Activated CD8-positive, alpha-beta T cell treated with anti-CD3 and anti-CD28 coated beads, Interleukin-2, amount 10 ng/mL, durations not matched to agents 7 days and 5 days (primary cell): ENCODE measurements at regions of chr1 and their contacts with region 1.

Region 1: DNA sequence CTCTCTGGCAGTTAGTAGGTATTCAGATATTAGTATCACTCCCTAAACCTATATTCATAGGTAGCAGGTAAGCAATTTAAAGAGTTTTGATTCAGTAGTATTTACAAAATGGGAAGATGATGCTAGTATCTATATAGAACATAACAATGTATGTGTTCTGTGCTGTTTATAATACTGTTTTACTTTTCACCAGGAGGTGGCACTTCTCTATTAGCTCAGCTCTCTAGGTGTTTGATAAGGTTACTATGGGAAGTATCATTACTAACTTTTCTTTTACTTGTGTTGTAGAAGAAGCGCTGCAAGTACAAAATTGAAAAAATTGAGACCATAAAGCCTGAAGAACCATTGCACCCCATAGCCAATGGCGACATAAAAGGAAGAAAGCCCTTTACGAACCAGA is 49.4 kb upstream of the FASLG start:
- DNase-seq: no peak
- ATAC-seq: peak; percentile 82
- H3K4me3 Mint-ChIP-seq: no peak overlapping the region
- H3K27ac Mint-ChIP-seq: peak overlapping the region; percentile 26
- H3K4me1 Mint-ChIP-seq: peaks cover 18% of the 10 kb centered on the region
- H3K27me3 Mint-ChIP-seq: no peaks in the 10 kb centered on the region

Region 2: DNA sequence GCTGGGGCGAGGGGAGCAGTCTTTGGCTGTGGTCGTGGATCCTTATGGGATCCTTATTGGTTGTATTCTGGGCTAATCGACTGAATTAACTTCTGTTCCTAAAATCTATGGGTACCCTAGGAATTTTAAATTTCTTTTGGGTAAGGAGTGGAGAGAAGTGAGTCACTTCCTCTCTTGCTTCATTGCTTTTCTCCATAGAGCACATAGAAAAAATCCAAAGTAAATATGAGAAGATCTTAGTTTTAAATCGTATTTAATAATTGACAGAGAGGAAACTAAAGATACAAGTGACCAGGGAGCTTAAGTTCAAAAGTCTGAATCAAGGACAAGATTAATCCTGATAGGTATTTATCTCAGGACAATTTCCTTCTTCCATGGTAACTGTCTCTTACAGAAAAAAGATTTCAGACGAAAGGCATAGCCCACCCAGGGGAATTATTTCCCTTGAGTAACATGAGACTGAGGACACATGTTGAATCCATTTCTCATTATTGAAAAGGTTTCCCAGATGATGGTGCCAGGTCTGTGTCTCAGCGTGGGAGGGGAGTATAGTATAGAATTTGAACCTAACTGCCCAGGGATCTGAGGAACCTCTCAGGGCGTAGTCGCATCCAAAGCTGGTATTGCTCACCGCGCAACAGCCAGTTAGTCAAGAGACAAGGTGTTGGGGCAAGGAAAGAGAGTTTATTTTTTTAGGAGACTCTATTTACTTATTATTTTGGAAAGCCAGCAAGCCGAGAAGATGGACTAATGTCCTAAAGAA is 20.7 kb after region 1 on chr1:
- CTCF ChIA-PET with region 1: interaction called, 12 read pairs
- POLR2A ChIA-PET with region 1: no interaction called
- DNase-seq: no peak
- ATAC-seq: no peak
- H3K4me3 Mint-ChIP-seq: no peak overlapping the region
- H3K27ac Mint-ChIP-seq: no peak overlapping the region
- H3K4me1 Mint-ChIP-seq: peaks cover 51% of the 10 kb centered on the region
- H3K27me3 Mint-ChIP-seq: peaks cover 6% of the 10 kb centered on the region

Region 3: GRCh38 chr1:172638885-172639831 is 29.6 kb after region 1 on chr1:
- CTCF ChIA-PET with region 1: interaction called, 11 read pairs
- POLR2A ChIA-PET with region 1: no interaction called
- DNase-seq: peak; percentile 87
- ATAC-seq: peak; percentile 81
- H3K4me3 Mint-ChIP-seq: peak overlapping the region; percentile 69
- H3K27ac Mint-ChIP-seq: peak overlapping the region; percentile 95
- H3K4me1 Mint-ChIP-seq: peaks cover 74% of the 10 kb centered on the region
- H3K27me3 Mint-ChIP-seq: no peaks in the 10 kb centered on the region

Region 4: DNA sequence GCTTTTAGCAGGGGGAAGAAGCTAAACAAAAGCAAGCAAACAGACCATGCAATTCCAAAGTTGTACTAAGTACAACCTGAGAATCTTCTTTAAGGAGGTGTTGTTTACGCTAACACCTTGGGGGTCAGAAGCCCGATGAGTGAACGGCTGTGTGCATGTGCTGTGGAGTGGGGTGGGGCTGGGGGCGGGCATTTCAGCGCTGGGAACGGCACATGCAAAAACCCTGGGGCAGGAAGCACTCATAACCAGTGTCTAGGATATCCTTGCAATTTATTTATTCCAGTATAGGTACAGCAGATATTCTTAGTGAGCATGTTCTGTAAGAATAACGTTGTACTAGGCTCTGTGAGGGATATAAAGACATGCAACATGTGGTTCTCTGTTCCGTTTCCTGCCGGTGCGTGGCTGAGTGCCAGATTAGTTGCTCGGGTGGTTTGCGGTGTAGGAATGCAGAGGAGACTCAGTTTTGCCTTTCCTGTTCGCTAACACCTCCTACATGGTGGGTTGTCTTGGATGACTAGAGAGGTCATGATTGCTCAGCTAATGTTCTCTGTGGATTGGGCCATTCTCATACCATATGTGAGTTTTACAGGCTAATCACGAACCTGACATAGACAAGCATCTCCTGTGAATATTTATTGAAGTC is 53.1 kb after region 1 on chr1:
- CTCF ChIA-PET with region 1: interaction called, 13 read pairs
- POLR2A ChIA-PET with region 1: interaction called, 3 read pairs
- DNase-seq: peak; percentile 93
- ATAC-seq: peak; percentile 80
- H3K4me3 Mint-ChIP-seq: peak overlapping the region; percentile 81
- H3K27ac Mint-ChIP-seq: peak overlapping the region; percentile 83
- H3K4me1 Mint-ChIP-seq: peaks cover 81% of the 10 kb centered on the region
- H3K27me3 Mint-ChIP-seq: no peaks in the 10 kb centered on the region

Region 5: GRCh38 chr1:172671591-172671990 is 62.1 kb after region 1 on chr1:
- CTCF ChIA-PET with region 1: interaction called, 11 read pairs
- POLR2A ChIA-PET with region 1: no interaction called
- DNase-seq: no peak
- ATAC-seq: no peak
- H3K4me3 Mint-ChIP-seq: no peak overlapping the region
- H3K27ac Mint-ChIP-seq: peak overlapping the region; percentile 25
- H3K4me1 Mint-ChIP-seq: peaks cover 89% of the 10 kb centered on the region
- H3K27me3 Mint-ChIP-seq: no peaks in the 10 kb centered on the region

Region 6: DNA sequence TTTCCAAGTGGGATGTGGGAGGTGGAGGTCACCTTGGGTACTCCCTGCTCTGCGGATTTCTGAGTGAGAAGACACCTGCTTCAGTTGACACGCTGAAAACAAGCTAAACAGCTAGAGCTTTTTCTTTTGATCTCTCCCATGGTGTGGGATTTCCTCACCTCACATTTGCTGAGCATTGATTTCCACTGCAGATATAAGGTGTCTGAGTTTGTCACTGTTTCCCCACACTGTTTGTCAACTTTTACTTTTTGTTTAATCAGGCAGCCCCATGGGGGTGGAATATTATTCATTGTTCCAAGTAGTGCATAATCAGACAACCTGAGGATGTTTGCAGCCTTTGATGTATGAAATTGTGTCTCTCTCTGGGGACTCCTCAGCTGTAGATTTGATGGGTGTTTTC is 98.9 kb after region 1 on chr1:
- CTCF ChIA-PET with region 1: interaction called, 15 read pairs
- POLR2A ChIA-PET with region 1: no interaction called
- DNase-seq: peak; percentile 61
- ATAC-seq: peak; percentile 81
- H3K4me3 Mint-ChIP-seq: peak overlapping the region; percentile 43
- H3K27ac Mint-ChIP-seq: peak overlapping the region; percentile 65
- H3K4me1 Mint-ChIP-seq: peaks cover 52% of the 10 kb centered on the region
- H3K27me3 Mint-ChIP-seq: peaks cover 2% of the 10 kb centered on the region

Region 7: DNA sequence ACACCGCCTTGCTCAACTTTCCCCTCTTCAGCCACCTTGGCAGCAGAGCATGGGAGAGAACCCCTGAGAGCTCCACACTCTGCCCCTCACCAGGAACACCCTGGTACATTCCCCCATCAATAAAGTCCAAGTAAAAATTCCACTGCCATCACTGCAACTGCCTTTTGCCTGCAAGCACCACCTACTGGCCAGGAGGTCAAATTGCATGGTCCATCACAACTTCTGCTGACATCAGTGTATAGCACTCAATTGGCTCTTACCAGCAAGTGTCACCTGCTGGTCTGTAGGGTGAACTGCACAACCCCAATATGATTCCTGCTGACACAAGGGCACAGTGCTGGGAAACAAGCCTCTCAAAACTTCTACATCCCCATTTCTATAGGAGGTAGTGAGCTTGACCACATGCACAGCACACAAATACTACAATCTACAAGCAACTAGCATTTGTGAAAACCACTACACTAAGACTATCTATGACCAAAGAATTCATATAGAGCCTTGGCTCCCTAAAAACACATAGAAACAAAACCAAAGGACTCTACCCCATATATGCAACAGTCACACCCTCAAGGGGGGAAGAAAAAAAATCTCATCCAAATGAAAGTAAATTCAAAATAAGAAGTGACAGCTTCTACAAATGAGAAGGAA is 118.6 kb after region 1 on chr1:
- CTCF ChIA-PET with region 1: interaction called, 92 read pairs
- POLR2A ChIA-PET with region 1: no interaction called
- DNase-seq: peak; percentile 68
- ATAC-seq: peak; percentile 88
- H3K4me3 Mint-ChIP-seq: no peak overlapping the region
- H3K27ac Mint-ChIP-seq: peak overlapping the region; percentile 1
- H3K4me1 Mint-ChIP-seq: peaks cover 38% of the 10 kb centered on the region
- H3K27me3 Mint-ChIP-seq: peaks cover 16% of the 10 kb centered on the region

Region 8: DNA sequence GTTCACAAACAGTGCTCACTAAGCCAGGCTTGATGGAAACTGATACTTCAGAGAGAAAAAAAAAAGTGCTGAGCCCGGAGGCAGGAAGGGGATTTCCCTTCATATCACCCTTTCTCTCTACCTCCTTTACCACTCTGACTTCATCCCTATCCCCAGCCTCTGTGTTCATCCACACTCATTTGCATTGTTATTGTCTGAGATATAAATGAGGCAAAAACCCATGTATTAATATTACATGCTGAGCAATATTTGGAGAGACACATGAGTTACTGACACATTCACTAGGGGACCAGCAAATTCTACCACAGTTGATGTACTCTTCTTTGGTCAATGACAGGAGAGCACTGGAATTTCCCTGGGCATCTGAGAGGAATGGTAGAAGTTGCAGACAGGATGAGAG is 265.4 kb after region 1 on chr1:
- CTCF ChIA-PET with region 1: no interaction called
- POLR2A ChIA-PET with region 1: no interaction called
- DNase-seq: peak; percentile 26
- ATAC-seq: peak; percentile 57
- H3K4me3 Mint-ChIP-seq: no peak overlapping the region
- H3K27ac Mint-ChIP-seq: no peak overlapping the region
- H3K4me1 Mint-ChIP-seq: peaks cover 32% of the 10 kb centered on the region
- H3K27me3 Mint-ChIP-seq: no peaks in the 10 kb centered on the region

Region 9: GRCh38 chr1:172969611-172970010 is 360.1 kb after region 1 on chr1:
- CTCF ChIA-PET with region 1: no interaction called
- POLR2A ChIA-PET with region 1: no interaction called
- DNase-seq: no peak
- ATAC-seq: no peak
- H3K4me3 Mint-ChIP-seq: no peak overlapping the region
- H3K27ac Mint-ChIP-seq: no peak overlapping the region
- H3K4me1 Mint-ChIP-seq: peaks cover 8% of the 10 kb centered on the region
- H3K27me3 Mint-ChIP-seq: no peaks in the 10 kb centered on the region